CD4-positive, alpha-beta memory T cell (primary cell): ENCODE measurements at regions of chr18 and their contacts with region 1.

Region 1: GRCh38 chr18:33946336-33946735 is 278.4 kb downstream of the NOL4 start:
- DNase-seq: no peak
- H3K4me3 ChIP-seq: no peak overlapping the region
- H3K4me3 Mint-ChIP-seq: no peak overlapping the region
- H3K27ac ChIP-seq: no peak overlapping the region
- H3K27ac Mint-ChIP-seq: no peak overlapping the region
- H3K4me1 ChIP-seq: no peaks in the 10 kb centered on the region
- H3K4me1 Mint-ChIP-seq: no peaks in the 10 kb centered on the region
- H3K27me3 ChIP-seq: no peaks in the 10 kb centered on the region
- H3K27me3 Mint-ChIP-seq: no peaks in the 10 kb centered on the region

Region 2: GRCh38 chr18:34001376-34001775 is 55.0 kb after region 1 on chr18:
- CTCF ChIA-PET with region 1: no interaction called
- POLR2A ChIA-PET with region 1: no interaction called
- intact Hi-C with region 1: loop called (anchors 10 kb)
- DNase-seq: no peak
- H3K4me3 ChIP-seq: no peak overlapping the region
- H3K4me3 Mint-ChIP-seq: no peak overlapping the region
- H3K27ac ChIP-seq: no peak overlapping the region
- H3K27ac Mint-ChIP-seq: no peak overlapping the region
- H3K4me1 ChIP-seq: no peaks in the 10 kb centered on the region
- H3K4me1 Mint-ChIP-seq: no peaks in the 10 kb centered on the region
- H3K27me3 ChIP-seq: no peaks in the 10 kb centered on the region
- H3K27me3 Mint-ChIP-seq: no peaks in the 10 kb centered on the region